CD4-positive, alpha-beta T cell (primary cell): ENCODE measurements at regions of chr10 and their contacts with region 1.

Region 1: GRCh38 chr10:23158370-23158769 is 33.7 kb upstream of the PTF1A start:
- DNase-seq: peak in 13 of 14 experiments; percentile 6 to 66 (median 18)
- ATAC-seq: peak; percentile 32
- H3K4me3 ChIP-seq: no peak overlapping the region
- H3K4me3 Mint-ChIP-seq: no peak overlapping the region
- H3K27ac ChIP-seq: no peak overlapping the region
- H3K27ac Mint-ChIP-seq: no peak overlapping the region
- H3K4me1 ChIP-seq: no peaks in the 10 kb centered on the region
- H3K4me1 Mint-ChIP-seq: no peaks in the 10 kb centered on the region
- H3K27me3 ChIP-seq: peaks cover 11 to 16% of the 10 kb centered on the region in 2 experiments
- H3K27me3 Mint-ChIP-seq: peaks cover 48% of the 10 kb centered on the region
- CTCF ChIP-seq: peak; percentile 83

Region 2: DNA sequence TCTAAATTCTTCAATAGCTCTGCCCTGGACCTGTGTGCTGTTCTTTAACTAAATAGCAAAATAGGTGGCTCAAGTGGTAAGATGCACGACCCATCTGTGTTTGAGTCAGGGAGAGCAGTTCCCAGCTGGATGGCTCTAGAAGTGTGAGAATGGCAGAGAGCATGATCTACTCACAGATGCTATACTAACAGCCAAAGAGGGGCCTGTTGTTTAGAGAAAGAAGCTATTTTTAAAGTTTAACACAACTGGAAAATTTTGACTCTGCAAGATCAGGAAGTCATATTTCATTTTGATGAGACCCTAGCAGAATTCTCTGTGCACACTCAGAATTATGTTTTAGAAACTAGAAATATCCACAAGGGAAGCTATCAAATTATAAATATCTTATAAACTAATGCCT is 356.6 kb before region 1 on chr10:
- CTCF ChIA-PET with region 1: no interaction called
- POLR2A ChIA-PET with region 1: no interaction called
- intact Hi-C with region 1: no loop called
- DNase-seq: no peak
- ATAC-seq: no peak
- H3K4me3 ChIP-seq: no peak overlapping the region
- H3K4me3 Mint-ChIP-seq: no peak overlapping the region
- H3K27ac ChIP-seq: no peak overlapping the region
- H3K27ac Mint-ChIP-seq: no peak overlapping the region
- H3K4me1 ChIP-seq: no peaks in the 10 kb centered on the region
- H3K4me1 Mint-ChIP-seq: no peaks in the 10 kb centered on the region
- H3K27me3 ChIP-seq: no peaks in the 10 kb centered on the region
- H3K27me3 Mint-ChIP-seq: no peaks in the 10 kb centered on the region
- CTCF ChIP-seq: no peak

Region 3: DNA sequence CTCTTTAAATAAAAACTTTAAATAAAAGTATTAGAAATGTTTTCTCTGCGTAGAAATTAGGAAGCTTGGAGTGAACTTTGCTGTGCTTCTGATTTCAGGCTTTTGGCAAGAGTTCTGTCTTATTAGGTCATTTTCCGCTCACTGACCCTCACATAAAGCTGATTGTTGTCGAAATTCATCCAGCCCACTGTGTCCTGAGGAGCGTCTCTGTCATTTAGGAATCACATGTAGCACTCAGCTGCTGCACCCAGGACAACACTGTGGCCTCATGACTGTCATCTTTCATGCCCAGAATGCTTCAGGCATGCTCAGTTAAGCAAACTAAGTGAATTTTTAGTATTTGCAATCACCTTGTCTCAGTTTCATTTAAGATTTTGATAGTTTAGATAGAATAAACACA is 120.8 kb before region 1 on chr10:
- CTCF ChIA-PET with region 1: no interaction called
- POLR2A ChIA-PET with region 1: no interaction called
- intact Hi-C with region 1: no loop called
- DNase-seq: no peak
- ATAC-seq: no peak
- H3K4me3 ChIP-seq: no peak overlapping the region
- H3K4me3 Mint-ChIP-seq: no peak overlapping the region
- H3K27ac ChIP-seq: no peak overlapping the region
- H3K27ac Mint-ChIP-seq: no peak overlapping the region
- H3K4me1 ChIP-seq: no peaks in the 10 kb centered on the region
- H3K4me1 Mint-ChIP-seq: no peaks in the 10 kb centered on the region
- H3K27me3 ChIP-seq: peaks cover 0 to 3% of the 10 kb centered on the region in 2 experiments
- H3K27me3 Mint-ChIP-seq: peaks cover 48% of the 10 kb centered on the region
- CTCF ChIP-seq: no peak

Region 4: DNA sequence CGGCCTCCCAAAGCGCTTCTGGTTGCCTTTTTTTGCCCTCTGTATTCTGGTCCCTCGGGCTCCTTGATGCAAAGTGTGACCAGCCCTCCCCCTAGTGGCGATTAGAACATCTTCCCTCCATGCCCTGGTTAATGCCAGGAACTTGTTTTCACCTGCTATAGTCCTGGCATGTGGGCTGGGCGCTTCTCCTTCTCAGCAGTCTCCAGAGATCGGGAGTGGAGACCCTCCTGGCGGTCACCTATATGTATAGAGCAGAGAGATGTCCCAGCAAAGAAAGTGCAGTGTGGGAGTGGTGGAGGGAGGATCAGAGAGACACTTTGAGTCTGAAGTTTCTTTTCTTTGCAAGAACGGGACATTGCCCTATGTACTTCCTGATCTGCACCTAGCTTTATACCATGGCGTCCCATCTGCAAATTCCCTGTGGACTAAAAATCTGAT is 544.6 kb after region 1 on chr10:
- CTCF ChIA-PET with region 1: no interaction called
- POLR2A ChIA-PET with region 1: no interaction called
- intact Hi-C with region 1: loop called in 1 of 2 experiments (anchors 2 kb)
- DNase-seq: peak; percentile 17 to 77 (median 38)
- ATAC-seq: peak; percentile 73
- H3K4me3 ChIP-seq: no peak overlapping the region
- H3K4me3 Mint-ChIP-seq: no peak overlapping the region
- H3K27ac ChIP-seq: no peak overlapping the region
- H3K27ac Mint-ChIP-seq: no peak overlapping the region
- H3K4me1 ChIP-seq: no peaks in the 10 kb centered on the region
- H3K4me1 Mint-ChIP-seq: no peaks in the 10 kb centered on the region
- H3K27me3 ChIP-seq: peaks cover 0 to 7% of the 10 kb centered on the region in 2 experiments
- H3K27me3 Mint-ChIP-seq: peaks cover 43% of the 10 kb centered on the region
- CTCF ChIP-seq: peak; percentile 71

Region 5: DNA sequence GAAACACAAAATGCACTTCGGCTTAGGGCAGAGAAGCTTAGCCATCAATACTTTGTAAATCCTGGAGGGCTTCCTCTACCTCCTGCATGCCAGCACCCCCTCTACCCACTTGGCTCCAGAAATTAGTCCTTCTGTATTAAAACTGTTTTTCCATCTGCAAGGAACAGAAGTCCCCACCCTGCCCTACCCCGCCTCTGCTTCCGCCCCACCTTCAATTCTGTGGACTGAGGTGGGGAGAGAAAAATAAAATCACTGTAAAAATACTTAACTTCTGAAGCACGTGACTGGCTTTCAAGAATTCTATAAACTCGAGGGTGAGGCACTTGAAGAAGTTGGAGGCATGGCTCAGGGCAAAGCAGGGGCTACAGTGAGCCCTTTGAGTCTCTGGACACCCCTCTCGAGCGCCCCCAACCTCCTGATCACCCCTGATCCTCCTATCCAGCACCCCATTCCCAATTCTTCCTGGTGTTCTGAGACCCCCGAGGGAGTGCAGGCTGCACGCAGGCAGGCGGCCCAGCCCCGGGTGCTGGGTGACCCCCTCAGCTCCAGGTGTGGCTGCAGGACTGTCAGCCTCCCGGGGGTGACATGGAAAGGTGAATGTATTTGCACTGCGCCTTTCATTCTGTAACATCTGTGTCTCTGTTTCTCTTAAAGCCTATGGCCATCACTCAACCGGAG is 1043.3 kb after region 1 on chr10:
- CTCF ChIA-PET with region 1: no interaction called
- POLR2A ChIA-PET with region 1: no interaction called
- intact Hi-C with region 1: loop called in 1 of 2 experiments (anchors 1 kb)
- DNase-seq: no peak
- ATAC-seq: no peak
- H3K4me3 ChIP-seq: no peak overlapping the region
- H3K4me3 Mint-ChIP-seq: no peak overlapping the region
- H3K27ac ChIP-seq: no peak overlapping the region
- H3K27ac Mint-ChIP-seq: no peak overlapping the region
- H3K4me1 ChIP-seq: no peaks in the 10 kb centered on the region
- H3K4me1 Mint-ChIP-seq: no peaks in the 10 kb centered on the region
- H3K27me3 ChIP-seq: peaks cover 0 to 3% of the 10 kb centered on the region in 2 experiments
- H3K27me3 Mint-ChIP-seq: peaks cover 24% of the 10 kb centered on the region
- CTCF ChIP-seq: no peak

Region 6: GRCh38 chr10:24503461-24504320 is 1345.3 kb after region 1 on chr10:
- CTCF ChIA-PET with region 1: no interaction called
- POLR2A ChIA-PET with region 1: no interaction called
- intact Hi-C with region 1: loop called in 1 of 2 experiments (anchors 2 kb)
- DNase-seq: peak in 4 of 14 experiments; percentile 14 to 47 (median 41)
- ATAC-seq: no peak
- H3K4me3 ChIP-seq: no peak overlapping the region
- H3K4me3 Mint-ChIP-seq: no peak overlapping the region
- H3K27ac ChIP-seq: no peak overlapping the region
- H3K27ac Mint-ChIP-seq: no peak overlapping the region
- H3K4me1 ChIP-seq: no peaks in the 10 kb centered on the region
- H3K4me1 Mint-ChIP-seq: no peaks in the 10 kb centered on the region
- H3K27me3 ChIP-seq: peaks cover 3 to 4% of the 10 kb centered on the region in 2 experiments
- H3K27me3 Mint-ChIP-seq: peaks cover 23% of the 10 kb centered on the region
- CTCF ChIP-seq: no peak

Region 7: DNA sequence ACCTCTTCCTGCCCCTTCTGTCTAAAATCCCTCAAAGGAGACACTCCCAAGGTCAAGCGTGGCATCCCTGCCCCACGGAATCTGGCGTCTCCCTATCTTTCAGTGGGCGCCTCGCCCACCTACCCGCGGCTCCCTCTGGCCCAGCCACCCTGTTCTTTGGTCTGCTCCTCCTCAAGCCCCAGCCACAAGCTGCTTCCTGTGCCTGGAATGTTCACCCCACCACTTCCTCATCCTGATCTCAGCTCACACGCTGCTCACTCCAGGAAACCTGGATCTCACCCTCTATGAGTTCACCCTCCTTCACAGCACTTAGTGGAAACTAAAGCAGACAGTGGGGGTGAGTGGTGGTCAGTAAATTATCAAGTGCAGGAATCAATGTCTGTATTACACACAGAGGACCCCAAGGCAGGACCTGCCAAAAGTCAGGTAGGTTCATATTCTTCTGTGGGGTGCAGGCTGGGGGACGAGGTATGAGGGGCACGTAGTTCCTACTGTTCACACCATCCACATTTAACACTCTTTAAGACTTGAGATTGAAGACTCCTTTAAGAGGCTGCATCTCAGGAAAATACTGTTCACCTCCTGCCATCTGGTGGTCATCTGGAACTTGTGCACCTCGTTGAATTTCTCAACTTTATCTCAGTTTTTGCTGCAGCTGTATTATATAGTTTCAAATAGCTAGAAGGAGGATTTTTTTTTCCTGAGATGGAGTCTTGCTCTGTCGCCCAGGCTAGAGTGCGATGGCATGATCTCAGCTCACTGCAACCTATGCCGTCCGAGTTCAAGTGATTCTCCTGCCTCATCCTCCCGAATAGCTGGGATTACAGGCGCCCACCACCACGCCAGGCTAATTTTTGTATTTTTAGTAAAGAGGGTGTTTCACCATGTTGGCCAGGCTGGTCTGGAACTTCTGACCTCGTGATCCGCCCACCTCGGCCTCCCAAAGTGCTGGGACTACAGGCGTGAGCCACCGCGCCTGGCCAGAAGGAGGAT is 1398.7 kb after region 1 on chr10:
- CTCF ChIA-PET with region 1: no interaction called
- POLR2A ChIA-PET with region 1: no interaction called
- intact Hi-C with region 1: loop called in 1 of 2 experiments (anchors 2 kb)
- DNase-seq: peak in 3 of 14 experiments; percentile 40 to 65 (median 51)
- ATAC-seq: peak; percentile 64
- H3K4me3 ChIP-seq: no peak overlapping the region
- H3K4me3 Mint-ChIP-seq: no peak overlapping the region
- H3K27ac ChIP-seq: no peak overlapping the region
- H3K27ac Mint-ChIP-seq: no peak overlapping the region
- H3K4me1 ChIP-seq: peaks cover 4% of the 10 kb centered on the region
- H3K4me1 Mint-ChIP-seq: peaks cover 3% of the 10 kb centered on the region
- H3K27me3 ChIP-seq: no peaks in the 10 kb centered on the region
- H3K27me3 Mint-ChIP-seq: no peaks in the 10 kb centered on the region
- CTCF ChIP-seq: peak; percentile 60